HEK293 (cell line): ENCODE measurements at regions of chr16 and their contacts with region 1.

Region 1: DNA sequence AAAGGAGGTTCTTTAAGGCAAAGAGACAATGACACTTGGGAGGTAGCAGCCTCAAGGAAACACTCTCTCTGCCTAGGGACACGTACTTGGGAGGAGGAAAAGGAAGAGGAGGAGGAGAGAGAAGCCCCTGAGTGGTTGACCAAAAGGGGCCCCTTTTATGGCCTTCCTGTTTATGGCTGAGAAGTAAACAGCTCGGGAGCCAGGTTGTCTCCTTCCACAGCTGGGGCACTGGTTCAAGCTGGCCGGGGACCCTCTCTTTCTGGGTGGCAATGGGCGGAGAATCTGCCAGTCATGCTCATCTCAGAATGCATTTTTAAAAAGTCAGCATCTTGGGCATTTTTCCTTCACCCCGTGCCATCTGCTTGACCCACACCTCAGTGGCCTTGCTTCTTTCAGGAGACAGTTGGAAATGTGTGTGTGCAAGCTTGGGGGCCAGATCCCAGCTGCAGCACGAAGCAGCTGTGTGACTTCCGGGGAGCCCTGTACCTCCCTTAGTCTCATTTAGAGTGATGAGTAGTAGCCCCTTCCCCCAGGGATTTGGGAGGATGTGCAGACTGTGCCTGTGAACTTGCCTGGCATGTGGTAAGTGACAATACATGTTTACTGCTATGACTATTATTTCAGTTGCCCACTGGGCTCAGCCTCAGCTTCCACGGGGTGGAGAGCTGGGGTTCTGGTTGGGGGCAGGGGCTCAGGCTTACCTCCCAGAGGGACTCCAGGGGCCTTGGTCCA is 33.8 kb upstream of the SALL1 start:
- H3K4me3 ChIP-seq: no peak overlapping the region
- H3K27ac ChIP-seq: no peak overlapping the region
- H3K4me1 ChIP-seq: 0 out of 2 replicates have a peak, but pooled peaks cover 2% of the 10 kb centered on the region
- CTCF ChIP-seq: no peak

Region 2: DNA sequence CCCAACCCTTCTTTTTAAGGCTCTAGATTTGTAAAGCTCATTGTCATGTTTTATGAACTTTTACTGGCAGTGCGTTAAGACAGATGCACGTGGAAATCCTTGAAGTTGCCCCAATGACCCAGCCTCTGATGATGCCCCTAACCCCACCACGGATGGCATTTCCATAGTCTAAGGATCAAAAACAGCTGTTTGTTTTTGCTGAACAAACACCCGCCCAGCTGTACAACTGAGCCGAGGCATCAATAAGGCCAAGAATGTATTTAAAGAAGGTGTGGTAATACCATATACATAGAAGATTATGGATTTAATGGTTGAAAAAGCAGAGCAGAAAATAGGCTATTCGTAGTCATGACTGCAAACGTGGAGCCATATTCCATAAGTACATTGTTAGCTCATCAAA is 117.5 kb before region 1 on chr16:
- CTCF ChIA-PET with region 1: no interaction called
- POLR2A ChIA-PET with region 1: interaction called, 10 read pairs
- H3K4me3 ChIP-seq: no peak overlapping the region
- H3K27ac ChIP-seq: no peak overlapping the region
- H3K4me1 ChIP-seq: no peaks in the 10 kb centered on the region
- CTCF ChIP-seq: no peak

Region 3: GRCh38 chr16:51392521-51393187 is 207.8 kb after region 1 on chr16:
- CTCF ChIA-PET with region 1: no interaction called
- POLR2A ChIA-PET with region 1: no interaction called
- H3K4me3 ChIP-seq: no peak overlapping the region
- H3K27ac ChIP-seq: no peak overlapping the region; the same call in 1 of the 2 replicates
- H3K4me1 ChIP-seq: peaks cover 4% of the 10 kb centered on the region; the same call in 1 of the 2 replicates
- CTCF ChIP-seq: no peak